Stomach (tissue), 19 donors: ENCODE measurements at regions of chr21 and their contacts with region 1.

Region 1: GRCh38 chr21:44792702-44793591 is 8.7 kb downstream of the UBE2G2 start:
- DNase-seq: peak; percentile 61 to 88
- H3K4me3 ChIP-seq: no peak overlapping the region
- H3K27ac ChIP-seq: no peak overlapping the region
- H3K4me1 ChIP-seq: peaks cover 5 to 32% (median 15%) of the 10 kb centered on the region in 4 donors
- H3K27me3 ChIP-seq: no peaks in the 10 kb centered on the region
- CTCF ChIP-seq: peak in 5 of 7 experiments; percentile 57 to 82 (median 65)
- EP300 ChIP-seq: no peak
- POLR2A ChIP-seq: no peak

Region 2: DNA sequence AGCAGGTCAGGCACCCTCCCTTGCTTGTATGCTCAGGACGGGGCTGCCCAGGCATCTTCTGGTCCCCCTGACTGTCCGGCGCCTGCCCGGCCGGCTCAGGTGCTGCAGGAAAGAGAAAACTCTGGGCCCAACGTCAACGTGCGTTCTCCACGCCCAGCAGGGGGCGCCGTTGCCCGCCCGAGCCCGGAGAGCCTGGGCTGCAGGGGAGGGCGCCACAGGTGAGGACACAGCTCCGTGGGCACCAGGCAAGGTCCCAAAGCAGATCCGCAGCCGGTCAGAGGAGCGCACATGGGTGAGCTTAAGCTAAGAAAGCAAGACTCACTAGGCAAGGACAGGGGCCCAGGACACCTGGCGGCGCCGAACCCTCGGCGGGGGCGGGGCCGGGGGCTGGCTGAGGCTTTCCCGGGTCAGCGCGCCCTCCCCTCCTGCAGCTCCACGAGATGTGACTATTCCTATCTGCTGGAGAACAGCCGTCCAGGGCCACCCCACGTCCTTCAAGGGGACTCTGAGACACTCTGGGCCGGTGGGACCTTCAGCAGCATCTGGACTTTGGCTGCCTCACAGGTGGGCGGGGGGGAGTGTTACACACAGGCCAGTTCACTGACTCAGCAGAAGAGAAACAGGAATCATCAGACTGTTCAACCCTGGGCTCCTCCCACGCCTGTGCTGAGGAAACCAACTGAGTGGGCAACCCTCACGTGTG is 282.3 kb before region 1 on chr21:
- intact Hi-C with region 1: loop called (anchors 10 kb)
- DNase-seq: peak; percentile 77 to 90
- H3K4me3 ChIP-seq: peak overlapping the region; percentile 10 to 37 (median 26)
- H3K27ac ChIP-seq: no peak overlapping the region
- H3K4me1 ChIP-seq: peaks cover 7 to 15% (median 13%) of the 10 kb centered on the region in 4 donors
- H3K27me3 ChIP-seq: peaks cover 0 to 67% (median 5%) of the 10 kb centered on the region in 3 donors
- CTCF ChIP-seq: peak in 5 of 7 experiments; percentile 52 to 80 (median 75)
- EP300 ChIP-seq: no peak
- POLR2A ChIP-seq: no peak

Region 3: DNA sequence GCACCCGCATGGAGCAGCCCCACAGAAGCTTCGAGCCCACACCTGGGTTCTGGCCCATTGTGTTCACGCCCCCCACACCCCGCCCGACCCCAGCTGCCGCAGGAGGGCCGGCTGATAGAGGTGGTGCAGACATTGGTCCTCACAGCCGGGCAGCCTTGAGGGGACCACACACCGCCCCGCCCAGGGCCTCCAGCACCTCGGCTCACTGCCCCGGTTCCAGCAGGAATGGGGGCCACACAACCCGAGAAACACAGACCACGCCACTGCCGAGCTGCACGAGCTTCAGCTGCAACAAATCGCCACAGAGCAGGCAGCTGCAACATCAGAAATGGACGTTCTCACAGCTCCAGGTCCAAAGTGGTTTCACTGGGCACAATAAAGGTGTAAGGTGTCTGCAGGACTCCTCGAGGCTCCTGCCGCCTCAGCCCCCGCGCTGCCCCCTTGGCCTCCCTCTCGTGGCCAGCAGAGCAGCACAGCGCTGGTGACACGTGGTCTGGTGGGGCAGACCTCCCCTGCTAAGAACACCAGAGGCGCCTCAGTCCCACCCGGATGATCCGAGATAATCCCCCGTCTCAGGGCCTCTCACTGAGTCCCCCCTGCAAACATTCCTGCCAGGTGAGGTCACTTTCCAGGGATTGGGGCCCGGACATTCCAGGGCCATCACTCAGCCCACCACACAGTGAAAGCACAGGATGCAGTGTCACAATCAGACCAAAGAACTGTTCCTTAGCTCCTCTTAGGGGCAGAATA is 219.1 kb after region 1 on chr21:
- intact Hi-C with region 1: no loop called
- DNase-seq: peak in 1 of 2 donors; percentile 71
- H3K4me3 ChIP-seq: no peak overlapping the region
- H3K27ac ChIP-seq: no peak overlapping the region
- H3K4me1 ChIP-seq: peaks cover 0 to 18% (median 15%) of the 10 kb centered on the region in 4 donors
- H3K27me3 ChIP-seq: peaks cover 0 to 62% (median 14%) of the 10 kb centered on the region in 3 donors
- CTCF ChIP-seq: no peak
- EP300 ChIP-seq: no peak
- POLR2A ChIP-seq: no peak

Region 4: GRCh38 chr21:45033791-45034555 is 241.0 kb after region 1 on chr21:
- intact Hi-C with region 1: no loop called
- DNase-seq: peak in 1 of 2 donors; percentile 47
- H3K4me3 ChIP-seq: no peak overlapping the region
- H3K27ac ChIP-seq: peak overlapping the region in 4 of 5 donors; percentile 42 to 80 (median 60)
- H3K4me1 ChIP-seq: peaks cover 26 to 63% (median 48%) of the 10 kb centered on the region in 4 donors
- H3K27me3 ChIP-seq: peaks cover 0 to 49% (median 24%) of the 10 kb centered on the region in 3 donors
- CTCF ChIP-seq: no peak
- EP300 ChIP-seq: no peak
- POLR2A ChIP-seq: no peak